OCI-LY7 (cell line): ENCODE measurements at regions of chr6 and their contacts with region 1.

Region 1: GRCh38 chr6:13466304-13467215 is 20.8 kb downstream of the GFOD1 start:
- DNase-seq: no peak
- H3K4me3 ChIP-seq: peak overlapping the region; percentile 2
- H3K27ac ChIP-seq: no peak overlapping the region
- H3K4me1 ChIP-seq: peaks cover 79% of the 10 kb centered on the region
- CTCF ChIP-seq: no peak

Region 2: DNA sequence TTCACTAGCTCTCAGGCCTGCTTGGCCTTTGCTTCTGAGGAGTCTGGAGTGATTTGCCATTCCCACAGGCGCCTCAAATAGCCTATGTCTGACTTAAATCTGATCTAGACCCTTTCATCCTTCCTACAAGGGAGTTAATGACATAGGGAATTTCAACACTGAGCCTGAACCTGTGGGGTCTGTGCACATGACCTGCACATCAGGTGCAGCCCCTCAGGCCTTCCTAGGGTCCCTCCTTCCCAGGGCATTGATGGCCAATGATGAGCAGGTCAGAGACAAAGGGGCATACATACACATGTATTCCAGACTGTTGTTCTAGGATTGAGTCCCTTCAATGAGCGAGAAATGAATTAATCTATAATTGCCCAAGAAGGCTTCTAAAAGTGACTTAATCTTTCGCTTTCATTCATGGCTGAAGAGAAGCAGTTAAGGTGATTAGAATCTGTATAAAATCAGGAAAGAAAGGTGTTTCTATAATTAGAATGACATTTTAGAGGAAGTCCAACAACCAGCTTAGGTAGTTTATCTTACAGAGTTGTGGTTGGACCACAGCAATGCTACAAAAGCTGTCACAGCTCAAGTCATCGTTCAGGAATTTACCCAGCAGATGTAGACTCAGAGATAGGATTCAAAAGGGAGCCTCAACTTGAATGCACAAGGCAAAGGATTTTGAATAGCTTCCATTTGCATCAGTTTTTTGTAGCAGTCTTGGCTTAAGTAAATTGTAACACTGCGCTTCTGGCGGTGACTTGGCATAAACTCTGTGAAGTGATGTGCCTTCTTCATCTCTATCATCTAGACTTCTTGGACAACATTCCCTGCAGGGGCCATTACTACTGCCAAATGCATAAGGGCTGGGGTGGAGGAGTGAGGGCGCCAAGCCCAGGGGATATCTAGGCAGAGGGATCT is 111.3 kb before region 1 on chr6:
- CTCF ChIA-PET with region 1: no interaction called
- POLR2A ChIA-PET with region 1: interaction called, 3 read pairs
- intact Hi-C with region 1: loop called (anchors 5 kb)
- DNase-seq: peak; percentile 45
- H3K4me3 ChIP-seq: peak overlapping the region; percentile 54
- H3K27ac ChIP-seq: peak overlapping the region; percentile 89
- H3K4me1 ChIP-seq: peaks cover 58% of the 10 kb centered on the region
- CTCF ChIP-seq: no peak

Region 3: DNA sequence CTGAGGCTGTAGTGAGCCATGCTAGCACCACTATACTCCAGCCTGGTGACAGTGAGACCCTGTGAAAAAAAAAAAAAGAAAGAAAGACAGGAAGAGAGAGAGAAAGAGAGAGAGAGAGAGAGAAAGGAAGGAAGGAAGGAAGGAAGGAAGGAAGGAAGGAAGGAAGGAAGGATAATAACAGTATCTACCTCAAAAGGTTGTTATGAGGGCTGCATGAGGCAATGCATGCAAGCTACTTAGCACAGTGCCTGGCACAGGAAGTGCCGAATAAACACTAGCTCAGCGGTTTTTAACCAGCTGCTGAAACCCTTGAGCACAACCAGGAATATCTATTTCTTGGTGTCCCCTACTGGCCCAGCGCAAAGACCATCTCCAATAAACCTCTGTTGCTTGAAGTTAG is 75.9 kb before region 1 on chr6:
- CTCF ChIA-PET with region 1: no interaction called
- POLR2A ChIA-PET with region 1: no interaction called
- intact Hi-C with region 1: no loop called
- DNase-seq: peak; percentile 29
- H3K4me3 ChIP-seq: no peak overlapping the region
- H3K27ac ChIP-seq: no peak overlapping the region
- H3K4me1 ChIP-seq: peaks cover 31% of the 10 kb centered on the region
- CTCF ChIP-seq: no peak